ENCODE measurements at regions of chr9 and their contacts with region 1.

Region 1: DNA sequence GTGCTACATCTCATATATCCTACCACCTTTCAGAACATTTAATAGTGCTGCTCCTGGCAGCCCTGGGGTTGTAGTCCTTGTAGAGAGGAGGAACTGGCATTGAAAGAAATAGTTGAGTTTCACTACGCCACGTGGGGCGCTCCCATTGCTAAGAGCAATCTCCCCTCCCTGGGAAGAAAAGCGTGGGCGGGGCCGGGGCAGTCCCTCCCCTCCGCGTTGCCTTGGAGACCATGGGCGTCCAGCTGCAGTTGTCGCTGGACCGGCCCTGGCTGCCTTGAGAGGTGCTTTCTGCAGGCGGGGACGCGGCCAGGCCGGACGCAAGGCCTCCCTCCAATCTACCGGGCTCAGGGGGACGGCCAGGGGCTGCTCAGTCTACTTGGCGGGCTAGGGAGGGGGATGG is 368 bp upstream of the CCDC180 start:
- DNase-seq: peak; percentile 66
- H3K4me3 ChIP-seq: peak overlapping the region in 1 of 3 experiments; percentile 1
- H3K27ac ChIP-seq: no peak overlapping the region
- H3K4me1 ChIP-seq: peaks cover 7% of the 10 kb centered on the region
- H3K27me3 ChIP-seq: peaks cover 16 to 24% of the 10 kb centered on the region in 2 experiments
- CTCF ChIP-seq: peak in 1 of 2 donors; percentile 21
- POLR2A ChIP-seq: no peak

Region 2: DNA sequence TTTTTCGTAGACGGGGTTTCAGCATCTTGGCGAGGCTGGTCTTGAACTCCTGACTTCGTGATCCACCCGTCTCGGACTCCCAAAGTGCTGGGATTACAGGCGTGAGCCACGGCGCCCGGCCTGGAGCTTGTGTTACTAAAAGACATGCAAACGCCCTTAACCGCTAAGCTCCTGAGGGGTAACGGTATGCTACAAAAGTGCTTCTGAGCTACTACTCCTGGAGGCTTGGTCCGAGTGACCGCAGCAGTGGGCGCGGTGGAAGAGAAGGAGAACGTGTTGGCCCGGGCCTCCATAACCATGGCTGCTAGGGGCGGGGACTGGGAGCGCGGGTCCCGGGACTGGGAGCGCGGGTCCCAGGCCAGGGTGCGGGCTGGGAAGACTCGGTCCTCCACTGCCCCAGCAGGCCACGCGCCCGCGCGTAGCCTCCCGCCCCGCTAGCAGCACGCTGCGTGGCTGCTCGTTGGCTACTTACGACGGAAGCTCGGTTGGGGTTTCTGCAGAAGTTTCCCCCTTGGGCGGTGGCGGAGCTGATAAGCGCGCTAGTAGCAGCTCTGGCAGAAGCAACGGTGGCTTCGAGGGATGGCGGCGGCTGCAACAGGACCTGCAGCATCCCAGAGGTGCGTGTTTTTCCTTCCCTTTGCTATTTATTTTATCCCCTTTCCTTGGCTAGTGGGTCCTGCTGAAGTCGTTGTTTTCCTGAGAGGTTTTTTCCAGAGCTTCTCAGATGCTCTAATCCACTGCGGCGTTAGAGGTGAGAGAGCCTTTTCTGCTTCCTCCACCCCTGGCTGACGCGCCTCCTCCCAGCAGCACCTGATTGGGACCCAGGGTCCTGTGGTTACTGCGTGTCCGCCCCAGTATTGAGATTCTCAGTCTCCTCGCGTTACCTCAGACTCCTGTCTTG is 68.9 kb before region 1 on chr9:
- CTCF ChIA-PET with region 1: no interaction called
- POLR2A ChIA-PET with region 1: no interaction called
- dilution Hi-C with region 1: no loop called
- intact Hi-C with region 1: loop called (anchors 5 kb)
- DNase-seq: peak; percentile 74
- H3K4me3 ChIP-seq: peak overlapping the region; percentile 48 to 92 (median 83)
- H3K27ac ChIP-seq: peak overlapping the region; percentile 11
- H3K4me1 ChIP-seq: peaks cover 6% of the 10 kb centered on the region
- H3K27me3 ChIP-seq: no peaks in the 10 kb centered on the region
- CTCF ChIP-seq: no peak
- POLR2A ChIP-seq: peak; percentile 70

Region 3: DNA sequence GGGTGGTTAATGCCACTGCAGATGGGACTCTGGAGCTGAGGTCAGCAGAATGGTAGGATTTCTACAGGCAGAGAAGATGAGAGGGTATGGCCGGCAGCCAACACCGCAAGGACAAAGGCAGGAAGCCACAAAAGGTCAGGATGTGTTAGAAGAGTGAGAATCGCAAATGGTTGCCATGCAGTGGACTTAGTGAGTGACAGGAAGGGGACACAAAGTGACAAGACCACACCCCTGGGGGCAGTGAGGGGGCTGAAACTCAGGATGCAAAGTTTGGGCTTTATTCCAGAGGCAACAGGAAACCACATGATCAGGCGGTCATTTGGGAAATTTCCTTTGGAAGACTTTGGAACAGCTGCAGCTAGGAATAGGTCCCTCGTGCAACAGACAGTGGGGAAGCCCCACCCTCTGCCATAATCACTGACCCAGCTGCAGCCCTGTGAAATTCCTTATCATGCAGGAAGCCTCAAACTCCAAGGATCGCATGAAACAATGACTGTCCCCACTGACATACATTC is 13.8 kb before region 1 on chr9:
- CTCF ChIA-PET with region 1: no interaction called
- POLR2A ChIA-PET with region 1: no interaction called
- dilution Hi-C with region 1: no loop called
- intact Hi-C with region 1: loop called (anchors 1 kb)
- DNase-seq: peak; percentile 71
- H3K4me3 ChIP-seq: no peak overlapping the region
- H3K27ac ChIP-seq: no peak overlapping the region
- H3K4me1 ChIP-seq: peaks cover 15% of the 10 kb centered on the region
- H3K27me3 ChIP-seq: no peaks in the 10 kb centered on the region
- CTCF ChIP-seq: no peak
- POLR2A ChIP-seq: no peak